ENCODE measurements at regions of chr12 and their contacts with region 1.

Region 1: GRCh38 chr12:33575346-33575745 is 135.7 kb upstream of the SYT10 start:
- DNase-seq: no peak
- ATAC-seq: no peak

Region 2: DNA sequence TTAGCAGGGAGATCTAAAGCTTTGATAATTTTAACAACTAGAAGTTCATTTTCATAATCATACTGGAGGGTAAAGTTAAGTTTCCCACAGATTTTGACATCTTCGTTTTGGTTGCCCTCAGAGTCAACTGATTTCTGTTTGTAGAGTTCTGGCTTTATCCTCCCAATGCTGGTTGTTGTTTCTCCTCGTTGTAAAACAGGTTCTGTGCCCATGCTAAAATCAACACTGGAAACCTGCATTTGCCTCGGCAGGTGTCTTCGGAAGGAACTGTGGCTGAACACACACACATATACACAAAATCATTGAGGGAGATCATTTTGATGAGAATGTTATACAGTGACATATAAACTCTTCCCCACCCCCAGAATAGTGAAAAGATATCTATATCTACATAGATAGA is 168.3 kb before region 1 on chr12:
- intact Hi-C with region 1: no loop called
- DNase-seq: no peak
- ATAC-seq: no peak

Region 3: DNA sequence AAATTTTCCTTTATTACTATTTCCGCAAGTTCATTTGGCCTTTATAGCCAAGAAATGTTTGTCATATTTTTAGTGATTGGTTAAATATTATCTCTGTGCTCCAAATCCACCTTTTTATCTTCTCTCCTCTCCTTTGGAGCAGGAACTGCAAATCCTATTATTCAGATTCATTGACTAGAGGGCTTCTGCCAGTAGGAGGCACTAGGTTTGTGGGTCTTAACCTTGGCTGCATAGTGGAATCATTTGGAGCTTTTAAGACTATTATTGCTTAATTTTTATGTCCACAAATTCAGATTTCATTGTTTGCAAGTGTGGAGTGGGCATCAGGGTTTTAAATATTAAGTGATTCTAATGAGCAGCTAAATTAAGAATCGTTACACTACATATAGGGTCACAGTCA is 60.5 kb before region 1 on chr12:
- intact Hi-C with region 1: loop called in 1 of 2 experiments (anchors 10 kb)
- DNase-seq: no peak
- ATAC-seq: no peak

Region 4: GRCh38 chr12:33609521-33610309 is 34.4 kb after region 1 on chr12:
- intact Hi-C with region 1: no loop called
- DNase-seq: no peak
- ATAC-seq: no peak

Region 5: DNA sequence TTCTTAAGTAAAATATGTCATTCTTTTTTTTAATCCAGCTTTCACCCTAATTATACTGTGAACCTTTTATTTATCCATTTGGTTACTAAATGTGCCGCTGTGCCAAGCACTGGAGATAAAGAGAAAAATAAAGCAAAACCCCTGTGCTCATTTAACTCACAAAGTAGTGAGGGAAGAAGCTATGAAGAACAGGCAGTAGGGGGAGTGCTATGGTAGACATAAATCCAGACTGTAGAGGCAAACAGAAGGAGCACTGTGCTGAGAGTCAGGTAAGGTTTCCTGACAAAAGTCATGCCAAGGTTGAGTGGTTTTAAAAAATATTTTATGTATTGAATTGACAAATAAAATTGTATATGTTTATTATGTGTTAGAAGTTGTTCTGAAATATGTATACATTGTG is 52.7 kb after region 1 on chr12:
- intact Hi-C with region 1: loop called in 1 of 2 experiments (anchors 10 kb)
- DNase-seq: no peak
- ATAC-seq: no peak

Region 6: GRCh38 chr12:33780774-33781173 is 205.4 kb after region 1 on chr12:
- intact Hi-C with region 1: no loop called
- DNase-seq: no peak
- ATAC-seq: no peak

Measured in left cardiac atrium (tissue), 4 donors.